CD8-positive, alpha-beta T cell (primary cell): ENCODE measurements at regions of chr6 and their contacts with region 1.

Region 1: DNA sequence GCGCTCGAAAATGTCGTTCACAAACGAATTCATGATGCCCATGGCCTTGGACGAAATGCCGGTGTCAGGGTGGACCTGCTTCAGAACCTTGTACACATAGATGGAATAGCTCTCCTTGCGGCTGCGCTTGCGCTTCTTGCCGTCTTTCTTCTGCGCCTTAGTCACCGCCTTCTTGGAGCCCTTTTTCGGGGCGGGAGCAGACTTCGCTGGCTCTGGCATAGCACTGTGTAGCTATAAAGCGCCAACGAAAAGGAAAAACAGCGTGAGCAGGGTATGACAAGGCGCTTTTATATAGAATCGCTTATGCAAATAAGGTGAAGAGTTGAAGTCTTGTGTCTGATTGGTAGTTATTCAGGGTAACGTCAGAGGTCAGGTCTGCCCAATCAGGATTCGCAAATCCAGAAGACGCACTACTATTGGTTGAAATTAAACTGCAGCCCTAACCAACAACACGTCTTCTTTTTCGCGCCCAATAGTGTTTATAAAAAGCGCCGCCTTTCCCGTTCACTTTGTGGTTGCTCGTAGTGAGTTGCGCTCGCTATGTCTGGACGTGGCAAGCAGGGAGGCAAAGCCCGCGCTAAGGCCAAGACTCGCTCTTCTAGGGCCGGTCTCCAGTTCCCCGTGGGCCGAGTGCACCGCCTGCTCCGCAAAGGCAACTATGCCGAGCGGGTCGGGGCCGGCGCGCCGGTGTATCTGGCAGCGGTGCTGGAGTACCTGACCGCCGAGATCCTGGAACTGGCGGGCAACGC is 114.8 kb upstream of the PRSS16 start:
- DNase-seq: peak; percentile 80 to 99 (median 87)
- ATAC-seq: peak; percentile 82
- H3K4me3 ChIP-seq: peak overlapping the region; percentile 76 to 83
- H3K4me3 Mint-ChIP-seq: no peak overlapping the region
- H3K27ac ChIP-seq: peak overlapping the region; percentile 86 to 92
- H3K27ac Mint-ChIP-seq: no peak overlapping the region
- H3K4me1 ChIP-seq: peaks cover 15% of the 10 kb centered on the region
- H3K4me1 Mint-ChIP-seq: peaks cover 21% of the 10 kb centered on the region
- H3K27me3 ChIP-seq: no peaks in the 10 kb centered on the region
- H3K27me3 Mint-ChIP-seq: no peaks in the 10 kb centered on the region
- CTCF ChIP-seq: no peak

Region 2: DNA sequence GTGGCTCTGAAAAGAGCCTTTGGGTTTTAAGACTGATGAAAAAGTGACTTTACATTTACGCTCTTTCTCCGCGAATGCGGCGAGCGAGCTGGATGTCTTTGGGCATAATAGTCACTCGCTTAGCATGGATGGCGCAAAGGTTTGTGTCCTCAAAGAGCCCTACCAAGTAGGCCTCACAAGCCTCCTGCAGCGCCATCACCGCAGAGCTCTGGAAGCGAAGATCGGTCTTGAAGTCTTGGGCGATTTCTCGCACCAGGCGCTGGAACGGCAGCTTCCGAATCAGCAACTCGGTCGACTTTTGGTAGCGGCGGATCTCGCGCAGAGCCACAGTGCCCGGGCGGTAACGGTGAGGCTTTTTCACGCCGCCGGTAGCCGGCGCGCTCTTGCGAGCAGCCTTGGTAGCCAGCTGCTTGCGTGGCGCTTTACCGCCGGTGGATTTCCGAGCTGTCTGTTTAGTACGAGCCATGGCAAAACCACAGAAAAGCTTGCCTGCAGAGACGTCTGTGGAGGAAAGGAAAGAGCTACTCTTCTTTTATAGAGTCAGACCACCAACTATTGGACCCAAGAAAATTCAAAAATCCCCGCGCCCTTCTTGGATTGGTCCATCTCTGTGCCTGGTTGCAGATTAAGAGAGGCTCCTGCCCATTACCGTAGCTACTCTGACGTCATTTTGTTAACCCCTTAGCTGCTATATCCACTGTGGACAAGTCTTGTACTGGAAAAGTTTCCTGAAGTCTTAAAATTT is 1100.9 kb before region 1 on chr6:
- CTCF ChIA-PET with region 1: no interaction called
- POLR2A ChIA-PET with region 1: interaction called, 25 read pairs
- intact Hi-C with region 1: loop called (anchors 5 kb)
- DNase-seq: peak; percentile 79 to 93 (median 88)
- ATAC-seq: peak; percentile 63
- H3K4me3 ChIP-seq: peak overlapping the region; percentile 68 to 71
- H3K4me3 Mint-ChIP-seq: peak overlapping the region; percentile 93
- H3K27ac ChIP-seq: peak overlapping the region; percentile 76 to 79
- H3K27ac Mint-ChIP-seq: peak overlapping the region; percentile 96
- H3K4me1 ChIP-seq: peaks cover 31% of the 10 kb centered on the region
- H3K4me1 Mint-ChIP-seq: peaks cover 46% of the 10 kb centered on the region
- H3K27me3 ChIP-seq: no peaks in the 10 kb centered on the region
- H3K27me3 Mint-ChIP-seq: no peaks in the 10 kb centered on the region
- CTCF ChIP-seq: no peak

Region 3: GRCh38 chr6:26175428-26176181 is 957.1 kb before region 1 on chr6:
- CTCF ChIA-PET with region 1: no interaction called
- POLR2A ChIA-PET with region 1: no interaction called
- intact Hi-C with region 1: loop called in 1 of 2 experiments (anchors 5 kb)
- DNase-seq: peak in 7 of 9 experiments; percentile 33 to 87 (median 53)
- ATAC-seq: no peak
- H3K4me3 ChIP-seq: no peak overlapping the region
- H3K4me3 Mint-ChIP-seq: peak overlapping the region; percentile 3
- H3K27ac ChIP-seq: no peak overlapping the region
- H3K27ac Mint-ChIP-seq: peak overlapping the region; percentile 63
- H3K4me1 ChIP-seq: peaks cover 26% of the 10 kb centered on the region
- H3K4me1 Mint-ChIP-seq: peaks cover 39% of the 10 kb centered on the region
- H3K27me3 ChIP-seq: no peaks in the 10 kb centered on the region
- H3K27me3 Mint-ChIP-seq: no peaks in the 10 kb centered on the region
- CTCF ChIP-seq: peak; percentile 93

Region 4: GRCh38 chr6:26270903-26271667 is 861.6 kb before region 1 on chr6:
- CTCF ChIA-PET with region 1: no interaction called
- POLR2A ChIA-PET with region 1: interaction called, 10 read pairs
- intact Hi-C with region 1: no loop called
- DNase-seq: peak; percentile 68 to 91 (median 80)
- ATAC-seq: peak; percentile 22
- H3K4me3 ChIP-seq: peak overlapping the region; percentile 65 to 67
- H3K4me3 Mint-ChIP-seq: no peak overlapping the region
- H3K27ac ChIP-seq: peak overlapping the region; percentile 73 to 92
- H3K27ac Mint-ChIP-seq: peak overlapping the region; percentile 73
- H3K4me1 ChIP-seq: peaks cover 22% of the 10 kb centered on the region
- H3K4me1 Mint-ChIP-seq: peaks cover 13% of the 10 kb centered on the region
- H3K27me3 ChIP-seq: no peaks in the 10 kb centered on the region
- H3K27me3 Mint-ChIP-seq: no peaks in the 10 kb centered on the region
- CTCF ChIP-seq: no peak

Region 5: GRCh38 chr6:27177485-27178406 is 45.0 kb after region 1 on chr6:
- CTCF ChIA-PET with region 1: interaction called, 3 read pairs
- POLR2A ChIA-PET with region 1: interaction called, 23 read pairs
- intact Hi-C with region 1: loop called in 1 of 2 experiments (anchors 2 kb)
- DNase-seq: peak; percentile 46 to 89 (median 72)
- ATAC-seq: peak; percentile 69
- H3K4me3 ChIP-seq: peak overlapping the region; percentile 95 to 100
- H3K4me3 Mint-ChIP-seq: peak overlapping the region; percentile 93
- H3K27ac ChIP-seq: peak overlapping the region; percentile 48 to 68
- H3K27ac Mint-ChIP-seq: peak overlapping the region; percentile 91
- H3K4me1 ChIP-seq: no peaks in the 10 kb centered on the region
- H3K4me1 Mint-ChIP-seq: peaks cover 17% of the 10 kb centered on the region
- H3K27me3 ChIP-seq: no peaks in the 10 kb centered on the region
- H3K27me3 Mint-ChIP-seq: peaks cover 3% of the 10 kb centered on the region
- CTCF ChIP-seq: peak; percentile 11

Region 6: GRCh38 chr6:27809939-27810767 is 677.4 kb after region 1 on chr6:
- CTCF ChIA-PET with region 1: interaction called, 4 read pairs
- POLR2A ChIA-PET with region 1: interaction called, 47 read pairs
- intact Hi-C with region 1: loop called in 1 of 2 experiments (anchors 1 kb)
- DNase-seq: peak; percentile 63 to 96 (median 74)
- ATAC-seq: peak; percentile 60
- H3K4me3 ChIP-seq: peak overlapping the region; percentile 52 to 65
- H3K4me3 Mint-ChIP-seq: peak overlapping the region; percentile 95
- H3K27ac ChIP-seq: peak overlapping the region; percentile 83 to 87
- H3K27ac Mint-ChIP-seq: peak overlapping the region; percentile 99
- H3K4me1 ChIP-seq: peaks cover 36% of the 10 kb centered on the region
- H3K4me1 Mint-ChIP-seq: peaks cover 57% of the 10 kb centered on the region
- H3K27me3 ChIP-seq: no peaks in the 10 kb centered on the region
- H3K27me3 Mint-ChIP-seq: no peaks in the 10 kb centered on the region
- CTCF ChIP-seq: no peak

Region 7: GRCh38 chr6:27871924-27872638 is 739.4 kb after region 1 on chr6:
- CTCF ChIA-PET with region 1: no interaction called
- POLR2A ChIA-PET with region 1: interaction called, 29 read pairs
- intact Hi-C with region 1: loop called in 1 of 2 experiments (anchors 1 kb)
- DNase-seq: peak; percentile 72 to 97 (median 85)
- ATAC-seq: peak; percentile 75
- H3K4me3 ChIP-seq: peak overlapping the region; percentile 54 to 67
- H3K4me3 Mint-ChIP-seq: peak overlapping the region; percentile 82
- H3K27ac ChIP-seq: peak overlapping the region; percentile 81 to 86
- H3K27ac Mint-ChIP-seq: peak overlapping the region; percentile 98
- H3K4me1 ChIP-seq: peaks cover 20% of the 10 kb centered on the region
- H3K4me1 Mint-ChIP-seq: peaks cover 36% of the 10 kb centered on the region
- H3K27me3 ChIP-seq: peaks cover 0 to 3% of the 10 kb centered on the region in 2 experiments
- H3K27me3 Mint-ChIP-seq: no peaks in the 10 kb centered on the region
- CTCF ChIP-seq: peak; percentile 48